ENCODE measurements at regions of chr6 and their contacts with region 1.

Region 1: GRCh38 chr6:37242429-37243052 is 15.0 kb upstream of the TBC1D22B start:
- DNase-seq: peak; percentile 98
- H3K4me3 ChIP-seq: no peak overlapping the region
- H3K27ac ChIP-seq: peak overlapping the region; percentile 99
- H3K27me3 ChIP-seq: no peaks in the 10 kb centered on the region
- CTCF ChIP-seq: no peak

Region 2: DNA sequence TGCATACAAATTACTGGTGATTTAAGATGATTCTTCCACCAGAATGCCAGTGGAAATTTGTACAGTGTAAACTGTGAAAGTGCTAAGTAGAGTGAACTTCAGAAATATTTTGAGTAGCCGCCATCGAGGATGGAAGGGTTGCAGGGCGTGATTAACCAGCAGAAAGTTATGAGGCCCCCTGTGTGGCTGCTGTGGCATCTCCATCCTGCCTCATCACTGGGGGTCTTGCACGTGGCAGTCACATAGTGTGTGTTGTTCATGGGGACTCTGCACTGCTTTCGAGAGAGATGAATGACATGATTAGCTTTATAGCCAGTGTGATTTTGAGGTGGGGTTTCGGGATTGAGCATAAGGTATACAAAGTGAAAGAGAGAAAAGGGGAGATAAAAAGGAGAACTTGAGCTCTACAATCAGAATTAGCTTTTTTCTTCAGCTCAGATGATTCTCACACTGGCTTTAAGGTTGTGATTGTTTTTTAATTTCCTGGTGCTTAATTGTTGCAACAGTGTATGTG is 773.3 kb before region 1 on chr6:
- CTCF ChIA-PET with region 1: no interaction called
- POLR2A ChIA-PET with region 1: no interaction called
- DNase-seq: no peak
- H3K4me3 ChIP-seq: no peak overlapping the region
- H3K27ac ChIP-seq: no peak overlapping the region
- H3K27me3 ChIP-seq: no peaks in the 10 kb centered on the region
- CTCF ChIP-seq: no peak

Region 3: DNA sequence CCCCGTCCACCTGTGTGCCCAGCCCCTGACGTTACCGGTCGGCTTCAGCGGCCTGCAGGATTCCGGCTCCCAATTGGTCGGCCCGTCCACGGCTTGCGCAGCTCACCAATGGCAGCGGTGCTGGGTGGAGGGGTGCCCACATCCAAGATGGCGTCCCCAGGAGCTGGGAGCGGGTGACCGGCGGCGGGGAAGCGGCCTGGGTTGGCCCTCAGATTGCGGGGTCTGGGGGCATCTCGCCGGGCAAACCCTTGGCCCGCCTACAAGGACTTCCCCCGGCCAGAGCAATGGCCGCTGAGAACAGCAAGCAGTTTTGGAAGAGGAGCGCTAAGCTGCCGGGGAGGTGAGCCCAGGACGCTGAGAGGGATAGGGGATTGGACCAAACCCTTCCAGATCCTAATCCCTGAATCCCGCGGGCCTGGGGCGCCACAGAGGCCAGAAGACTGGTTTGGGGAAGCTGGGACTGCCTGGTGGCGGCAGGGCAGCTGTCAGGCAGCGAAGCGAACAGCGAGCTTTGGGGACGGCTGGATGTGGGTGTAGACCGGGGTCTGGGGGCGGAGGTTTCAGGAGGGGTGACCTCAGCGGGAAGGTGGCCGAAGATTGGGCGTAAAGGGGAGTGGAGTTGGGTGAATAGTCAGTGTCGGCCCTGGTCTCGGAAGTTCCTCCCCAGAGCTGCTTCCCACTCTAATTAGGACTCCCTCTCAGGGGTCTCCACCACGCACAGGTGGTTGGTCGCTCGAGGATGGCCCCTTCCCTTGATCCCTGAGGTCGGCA is 15.3 kb after region 1 on chr6 and contains the starts of genes TBC1D22B and TMEM217:
- CTCF ChIA-PET with region 1: interaction called, 3 read pairs
- POLR2A ChIA-PET with region 1: interaction called, 18 read pairs
- DNase-seq: peak; percentile 72
- H3K4me3 ChIP-seq: peak within 1 kb of the TSS; percentile 90
- H3K27ac ChIP-seq: peak within 1 kb of the TSS; percentile 90
- H3K27me3 ChIP-seq: no peaks in the 10 kb centered on the region
- CTCF ChIP-seq: no peak
- polyA plus RNA-seq, gene TBC1D22B: 9.7 and 9.8 TPM in 2 replicates
- polyA plus RNA-seq, gene TMEM217: 7.7 and 7.8 TPM in 2 replicates

Region 4: DNA sequence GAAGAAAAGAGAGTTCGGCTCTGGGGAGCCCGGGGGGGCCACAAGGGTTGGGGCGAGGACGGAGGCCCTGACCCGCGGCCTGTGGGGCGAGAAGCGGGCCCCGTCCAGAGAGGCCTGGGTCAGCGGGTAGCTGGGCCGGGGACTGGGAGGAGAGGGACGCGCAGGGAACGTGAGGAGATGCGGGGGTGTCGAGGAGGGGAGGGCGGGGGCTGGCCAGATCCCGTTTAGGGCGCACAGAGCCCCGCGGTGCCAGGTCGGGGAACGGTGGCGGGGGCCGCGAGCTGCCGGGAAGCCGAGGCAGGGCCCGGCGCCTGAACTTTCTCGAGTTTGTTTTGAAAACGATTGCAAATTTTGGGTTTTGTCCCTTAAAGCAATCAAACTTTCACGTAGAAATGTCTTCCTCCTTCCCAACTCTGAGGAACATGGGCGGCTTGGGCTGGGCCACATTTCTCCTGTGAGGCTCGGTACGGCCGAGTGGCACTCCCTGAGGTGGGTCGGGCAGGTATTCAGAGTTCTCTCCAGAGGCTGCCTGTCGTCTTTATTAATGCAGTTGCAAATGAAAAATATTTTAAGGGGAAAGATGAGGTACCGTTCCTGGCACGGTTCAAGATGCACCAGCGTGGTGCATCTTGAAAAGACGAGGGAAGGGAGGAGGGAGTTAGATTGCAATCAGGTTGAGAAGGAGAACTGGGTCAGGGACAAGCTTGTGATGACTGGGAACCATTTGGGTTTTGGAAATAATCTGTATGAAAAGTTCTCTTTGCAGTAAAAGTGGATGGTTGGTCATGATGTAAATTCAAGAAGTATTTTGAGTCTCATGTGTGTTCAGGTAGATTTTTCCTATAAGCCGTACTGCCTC is 112.2 kb after region 1 on chr6:
- CTCF ChIA-PET with region 1: no interaction called
- POLR2A ChIA-PET with region 1: no interaction called
- DNase-seq: no peak
- H3K4me3 ChIP-seq: peak overlapping the region; percentile 92
- H3K27ac ChIP-seq: peak overlapping the region; percentile 21
- H3K27me3 ChIP-seq: no peaks in the 10 kb centered on the region
- CTCF ChIP-seq: no peak

Measured in AG04450 (cell line).